ENCODE measurements at regions of chr11 and their contacts with region 1.

Region 1: DNA sequence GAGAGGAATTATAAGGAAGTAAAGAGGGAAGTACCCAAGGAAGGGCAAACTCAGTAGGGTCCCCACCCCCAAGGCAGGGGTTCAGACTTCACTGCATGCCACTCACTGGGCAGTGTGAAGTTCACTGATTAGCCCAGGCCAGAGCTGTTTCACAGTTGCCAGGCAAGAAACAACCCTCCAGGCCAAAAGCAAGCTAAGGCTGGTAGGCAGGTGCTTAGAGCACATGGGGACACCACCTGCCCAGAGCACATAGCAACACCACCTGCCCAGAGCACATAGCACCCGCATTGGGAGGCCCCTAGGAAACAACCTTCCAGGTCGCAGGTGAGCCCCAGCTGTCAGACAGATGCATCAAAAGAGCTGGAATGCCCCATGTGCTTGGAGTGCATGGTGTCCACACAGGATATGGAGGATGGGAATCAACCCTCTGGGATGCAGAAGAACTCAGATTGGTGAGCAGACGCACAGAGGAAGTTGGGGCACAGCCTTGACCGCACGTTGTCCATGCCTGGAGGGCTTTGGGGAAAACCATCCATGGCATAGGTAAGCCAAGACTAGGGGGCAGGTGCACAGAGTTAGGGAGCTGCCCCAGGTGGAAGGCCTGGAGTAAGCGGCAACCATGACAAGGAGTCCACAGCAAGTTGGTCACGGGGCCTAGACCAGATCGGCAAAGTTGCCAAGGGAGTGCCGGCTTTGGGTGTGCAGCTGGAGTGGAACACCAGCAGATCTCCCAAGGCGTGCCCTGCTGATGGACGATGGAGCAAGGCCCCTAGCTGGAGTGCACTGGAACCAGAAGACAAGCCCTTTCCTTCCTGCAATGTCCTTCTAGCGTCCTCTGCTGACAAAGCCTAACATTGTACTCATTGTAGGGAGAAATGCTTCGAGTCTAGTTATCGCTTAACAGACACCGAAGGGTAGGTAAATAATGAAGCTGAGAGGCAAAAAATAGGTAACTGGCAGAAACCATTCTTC is 7.8 kb upstream of the TMEM216 start:
- DNase-seq: peak in 5 of 7 donors; percentile 49 to 70 (median 63)
- H3K4me3 ChIP-seq: no peak overlapping the region
- H3K27ac ChIP-seq: no peak overlapping the region
- H3K4me1 ChIP-seq: peaks cover 0 to 5% of the 10 kb centered on the region in 2 donors
- H3K27me3 ChIP-seq: no peaks in the 10 kb centered on the region
- CTCF ChIP-seq: peak in 5 of 6 experiments; percentile 30 to 76 (median 52)
- POLR2A ChIP-seq: no peak

Region 2: DNA sequence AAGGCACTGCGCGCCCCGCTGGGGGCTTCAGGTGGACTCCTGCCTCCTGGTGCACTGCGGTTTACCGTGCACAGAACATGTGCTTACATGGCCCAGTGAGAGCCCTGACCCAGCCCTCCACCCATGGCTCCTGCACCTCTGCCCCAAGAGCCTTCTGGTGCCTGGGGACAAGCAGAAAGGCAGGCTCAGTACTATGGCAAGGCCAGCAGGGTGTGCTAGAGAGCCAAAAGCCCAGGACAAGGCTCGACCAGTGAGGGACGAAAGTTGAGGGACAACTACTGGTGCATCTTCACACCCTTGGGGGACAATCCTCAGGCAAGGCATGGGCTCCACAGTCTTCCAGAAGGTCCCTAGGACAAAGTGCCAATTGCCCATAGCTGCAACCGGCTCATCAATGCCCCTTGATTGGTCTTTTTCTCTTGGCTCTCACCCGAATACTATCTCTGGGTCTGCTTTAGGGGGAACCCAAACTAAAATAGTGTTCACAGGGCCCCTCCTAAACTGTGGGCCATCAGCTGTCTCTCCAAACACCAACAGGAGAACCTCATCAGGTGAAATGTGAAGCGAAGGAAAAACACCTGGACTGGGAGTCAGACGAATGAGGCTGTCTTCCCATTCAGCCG is 130.0 kb before region 1 on chr11:
- intact Hi-C with region 1: loop called (anchors 5 to 10 kb)
- DNase-seq: peak; percentile 62 to 80 (median 71)
- H3K4me3 ChIP-seq: no peak overlapping the region
- H3K27ac ChIP-seq: no peak overlapping the region
- H3K4me1 ChIP-seq: no peaks in the 10 kb centered on the region
- H3K27me3 ChIP-seq: no peaks in the 10 kb centered on the region
- CTCF ChIP-seq: peak; percentile 75 to 87 (median 83)
- POLR2A ChIP-seq: no peak

Region 3: DNA sequence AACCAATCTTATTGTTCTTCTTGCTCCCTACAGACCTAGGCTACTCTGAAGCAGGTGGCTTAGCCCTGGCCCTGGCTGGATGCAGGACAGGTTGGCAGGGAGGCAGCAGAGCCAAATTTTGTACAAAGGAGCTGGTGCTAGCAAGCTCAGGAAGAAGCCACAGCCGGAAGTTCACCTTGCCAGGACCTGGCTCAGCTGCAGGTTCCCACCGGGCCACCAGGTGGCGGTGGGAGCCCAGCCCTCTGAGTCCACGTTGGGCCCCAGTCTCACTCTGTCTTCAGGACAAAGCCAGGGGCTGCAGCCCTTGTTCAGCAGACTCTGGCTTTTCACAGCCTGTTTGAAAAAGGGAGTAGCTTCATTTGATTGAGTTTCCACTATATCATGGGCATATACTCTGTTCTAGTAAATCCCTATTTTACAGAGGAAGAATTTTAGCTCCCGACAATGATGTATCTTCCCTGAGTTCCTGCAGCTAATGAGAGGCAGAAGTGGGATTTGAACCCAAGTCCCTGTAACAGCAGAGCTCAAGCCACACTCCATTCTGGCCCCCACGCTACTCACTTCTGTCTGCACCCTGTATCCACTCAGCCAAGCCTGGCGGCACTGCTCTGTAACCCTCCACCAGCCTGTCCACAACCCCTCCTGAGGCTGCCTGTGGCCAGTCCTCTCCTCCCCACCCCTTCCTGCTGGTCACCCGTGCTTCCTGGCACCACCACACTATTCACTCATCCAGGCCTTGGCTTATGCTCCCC is 48.2 kb before region 1 on chr11:
- intact Hi-C with region 1: loop called (anchors 2 kb)
- DNase-seq: peak; percentile 76 to 91 (median 86)
- H3K4me3 ChIP-seq: no peak overlapping the region
- H3K27ac ChIP-seq: peak overlapping the region; percentile 82 to 98 (median 92)
- H3K4me1 ChIP-seq: peaks cover 32 to 42% of the 10 kb centered on the region in 2 donors
- H3K27me3 ChIP-seq: no peaks in the 10 kb centered on the region
- CTCF ChIP-seq: peak; percentile 97 to 99 (median 99)
- POLR2A ChIP-seq: no peak